ENCODE measurements at regions of chr3 and their contacts with region 1.

Region 1: DNA sequence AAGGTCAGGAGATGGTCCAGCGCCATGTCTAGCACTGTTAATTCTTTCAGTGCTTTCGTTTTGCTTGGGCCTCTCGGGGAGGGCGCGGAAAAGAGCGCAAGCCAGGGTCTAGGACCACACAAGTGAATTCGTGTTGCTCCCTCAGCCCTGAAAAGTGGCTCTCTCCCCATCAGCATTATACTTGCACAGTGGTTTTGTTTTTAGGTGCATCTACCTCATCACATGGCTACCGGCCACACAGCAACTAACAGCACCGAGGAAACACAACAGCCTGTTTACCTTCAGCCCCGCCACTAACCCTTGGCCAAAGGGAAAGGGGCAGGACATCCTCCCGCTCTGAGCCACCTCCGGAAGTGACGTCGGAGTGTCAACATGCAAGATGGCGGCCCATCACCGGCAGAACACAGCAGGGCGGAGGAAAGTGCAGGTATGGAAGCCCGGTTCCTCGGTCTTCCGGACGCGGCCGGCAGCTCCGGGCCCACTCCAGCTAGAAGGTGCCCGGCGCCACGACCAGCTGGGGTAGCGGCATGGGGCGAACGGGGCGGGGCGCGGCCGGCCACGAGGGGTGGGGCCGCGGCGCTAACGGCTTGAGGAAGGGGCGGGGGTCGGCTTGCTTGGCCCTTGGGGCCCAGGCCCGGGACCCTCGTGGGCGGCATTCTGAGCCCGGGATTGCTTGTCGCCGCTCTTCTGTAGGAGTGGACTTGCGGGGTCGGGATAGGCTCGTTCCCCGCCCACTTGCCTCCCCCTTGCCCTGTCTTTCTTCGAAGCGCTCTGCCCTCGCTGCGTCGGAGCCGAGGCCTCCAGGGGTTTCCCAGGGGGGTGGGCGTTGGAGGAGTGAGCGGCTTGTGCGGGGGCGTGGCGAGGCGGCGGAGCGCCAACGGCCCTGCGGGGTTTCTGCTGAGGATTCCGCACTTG is at the starts of genes SCN11A and WDR48:
- DNase-seq: peak; percentile 85 to 97 (median 90)
- ATAC-seq: peak; percentile 89
- H3K4me3 ChIP-seq: peak within 1 kb of the TSS; percentile 84
- H3K4me3 Mint-ChIP-seq: peak within 1 kb of the TSS; percentile 95
- H3K27ac ChIP-seq: peak within 1 kb of the TSS; percentile 90 to 95
- H3K27ac Mint-ChIP-seq: peak within 1 kb of the TSS; percentile 99
- H3K4me1 ChIP-seq: peaks cover 25% of the 10 kb centered on the region
- H3K4me1 Mint-ChIP-seq: peaks cover 72% of the 10 kb centered on the region
- H3K27me3 ChIP-seq: no peaks in the 10 kb centered on the region
- H3K27me3 Mint-ChIP-seq: no peaks in the 10 kb centered on the region
- CTCF ChIP-seq: no peak
- total RNA-seq, gene SCN11A: 0.08 TPM in 1 of 2 experiments, not detected in the other
- total RNA-seq, gene WDR48: 81.2 to 88.6 TPM

Region 2: DNA sequence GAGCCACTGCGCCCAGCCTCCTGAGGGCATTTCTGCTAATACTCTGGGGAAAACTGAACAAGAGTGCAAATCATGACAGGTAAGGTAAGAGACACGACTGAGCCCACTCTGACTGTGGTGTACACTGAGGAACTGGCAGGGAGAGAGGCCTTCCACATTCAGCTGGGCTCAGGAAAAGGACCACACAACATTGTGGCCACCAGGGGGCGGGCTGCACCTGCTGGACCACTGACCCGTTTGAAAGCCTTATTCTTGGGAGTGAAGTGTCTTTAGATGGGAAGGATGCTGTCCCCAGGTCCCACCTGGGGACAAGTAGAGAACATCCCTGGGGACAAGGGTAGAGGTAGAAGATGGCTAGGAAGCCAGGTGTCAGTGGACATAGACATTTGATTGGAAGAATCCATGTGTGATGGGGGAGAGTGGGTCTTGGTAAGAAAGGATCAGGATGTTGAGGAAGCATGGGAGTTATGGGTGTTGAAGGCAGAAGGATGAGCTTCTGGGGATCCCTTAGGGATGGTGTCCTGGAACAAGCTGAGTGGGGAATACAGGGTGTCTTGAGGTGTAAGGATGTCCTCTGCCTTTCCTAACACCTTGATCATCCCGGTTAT is 1196.4 kb before region 1 on chr3:
- CTCF ChIA-PET with region 1: no interaction called
- POLR2A ChIA-PET with region 1: no interaction called
- intact Hi-C with region 1: loop called in 1 of 2 experiments (anchors 10 kb)
- DNase-seq: peak; percentile 50 to 85 (median 70)
- ATAC-seq: peak; percentile 47
- H3K4me3 ChIP-seq: no peak overlapping the region
- H3K4me3 Mint-ChIP-seq: peak overlapping the region; percentile 7
- H3K27ac ChIP-seq: no peak overlapping the region
- H3K27ac Mint-ChIP-seq: no peak overlapping the region
- H3K4me1 ChIP-seq: peaks cover 8% of the 10 kb centered on the region
- H3K4me1 Mint-ChIP-seq: peaks cover 8% of the 10 kb centered on the region
- H3K27me3 ChIP-seq: no peaks in the 10 kb centered on the region
- H3K27me3 Mint-ChIP-seq: no peaks in the 10 kb centered on the region
- CTCF ChIP-seq: peak; percentile 89

Region 3: GRCh38 chr3:38950581-38950980 is 101.3 kb before region 1 on chr3:
- CTCF ChIA-PET with region 1: no interaction called
- POLR2A ChIA-PET with region 1: no interaction called
- intact Hi-C with region 1: no loop called
- DNase-seq: peak in 1 of 14 experiments; percentile 2
- ATAC-seq: no peak
- H3K4me3 ChIP-seq: no peak overlapping the region
- H3K4me3 Mint-ChIP-seq: no peak overlapping the region
- H3K27ac ChIP-seq: no peak overlapping the region
- H3K27ac Mint-ChIP-seq: no peak overlapping the region
- H3K4me1 ChIP-seq: no peaks in the 10 kb centered on the region
- H3K4me1 Mint-ChIP-seq: no peaks in the 10 kb centered on the region
- H3K27me3 ChIP-seq: no peaks in the 10 kb centered on the region
- H3K27me3 Mint-ChIP-seq: peaks cover 6% of the 10 kb centered on the region
- CTCF ChIP-seq: no peak

Region 4: GRCh38 chr3:39107388-39108199 is 55.7 kb after region 1 on chr3 and contains the starts of genes GORASP1 and TTC21A:
- CTCF ChIA-PET with region 1: no interaction called
- POLR2A ChIA-PET with region 1: interaction called, 3 read pairs
- intact Hi-C with region 1: loop called in 1 of 2 experiments (anchors 2 kb)
- DNase-seq: peak in 13 of 14 experiments; percentile 33 to 84 (median 62)
- ATAC-seq: peak; percentile 71
- H3K4me3 ChIP-seq: peak within 1 kb of the TSS; percentile 96
- H3K4me3 Mint-ChIP-seq: peak within 1 kb of the TSS; percentile 97
- H3K27ac ChIP-seq: peak within 1 kb of the TSS; percentile 56 to 57
- H3K27ac Mint-ChIP-seq: peak within 1 kb of the TSS; percentile 81
- H3K4me1 ChIP-seq: peaks cover 54% of the 10 kb centered on the region
- H3K4me1 Mint-ChIP-seq: peaks cover 50% of the 10 kb centered on the region
- H3K27me3 ChIP-seq: no peaks in the 10 kb centered on the region
- H3K27me3 Mint-ChIP-seq: no peaks in the 10 kb centered on the region
- CTCF ChIP-seq: no peak
- total RNA-seq, gene GORASP1: 29.1 to 31.5 TPM
- total RNA-seq, gene TTC21A: 4.1 to 5.2 TPM

Region 5: DNA sequence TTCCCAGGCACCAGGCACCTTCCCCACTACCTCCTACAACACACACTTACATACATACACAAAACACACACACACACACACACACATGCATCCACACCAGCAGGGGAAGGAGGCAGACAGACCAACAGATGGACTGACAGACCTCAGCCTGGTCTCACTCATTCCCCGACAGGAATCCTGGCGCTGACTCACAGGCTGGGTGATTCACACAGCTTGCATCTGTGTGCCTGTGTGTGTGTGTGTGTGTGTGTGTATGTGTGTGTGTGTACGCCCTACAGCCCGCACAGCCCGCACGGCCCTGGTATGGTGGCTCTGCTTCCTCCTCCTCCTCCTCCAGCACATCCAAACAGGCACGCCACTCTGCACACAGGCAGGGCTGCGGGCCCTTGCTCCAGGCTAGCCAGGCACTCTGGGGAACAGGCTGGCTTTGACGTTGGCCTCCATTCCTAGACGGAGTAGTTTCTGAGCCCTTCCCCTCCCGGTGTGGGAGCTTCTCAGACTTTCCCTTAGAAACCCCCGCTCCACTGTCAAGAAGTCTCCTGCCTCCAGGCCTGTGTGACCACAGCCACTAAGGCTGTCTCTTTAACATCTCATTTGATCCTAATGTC is 95.2 kb after region 1 on chr3:
- CTCF ChIA-PET with region 1: no interaction called
- POLR2A ChIA-PET with region 1: interaction called, 3 read pairs
- intact Hi-C with region 1: loop called in 1 of 2 experiments (anchors 10 kb)
- DNase-seq: peak in 13 of 14 experiments; percentile 48 to 89 (median 71)
- ATAC-seq: peak; percentile 27
- H3K4me3 ChIP-seq: peak overlapping the region; percentile 44
- H3K4me3 Mint-ChIP-seq: peak overlapping the region; percentile 93
- H3K27ac ChIP-seq: peak overlapping the region; percentile 64 to 83
- H3K27ac Mint-ChIP-seq: peak overlapping the region; percentile 97
- H3K4me1 ChIP-seq: peaks cover 77% of the 10 kb centered on the region
- H3K4me1 Mint-ChIP-seq: peaks cover 83% of the 10 kb centered on the region
- H3K27me3 ChIP-seq: no peaks in the 10 kb centered on the region
- H3K27me3 Mint-ChIP-seq: no peaks in the 10 kb centered on the region
- CTCF ChIP-seq: no peak

Region 6: DNA sequence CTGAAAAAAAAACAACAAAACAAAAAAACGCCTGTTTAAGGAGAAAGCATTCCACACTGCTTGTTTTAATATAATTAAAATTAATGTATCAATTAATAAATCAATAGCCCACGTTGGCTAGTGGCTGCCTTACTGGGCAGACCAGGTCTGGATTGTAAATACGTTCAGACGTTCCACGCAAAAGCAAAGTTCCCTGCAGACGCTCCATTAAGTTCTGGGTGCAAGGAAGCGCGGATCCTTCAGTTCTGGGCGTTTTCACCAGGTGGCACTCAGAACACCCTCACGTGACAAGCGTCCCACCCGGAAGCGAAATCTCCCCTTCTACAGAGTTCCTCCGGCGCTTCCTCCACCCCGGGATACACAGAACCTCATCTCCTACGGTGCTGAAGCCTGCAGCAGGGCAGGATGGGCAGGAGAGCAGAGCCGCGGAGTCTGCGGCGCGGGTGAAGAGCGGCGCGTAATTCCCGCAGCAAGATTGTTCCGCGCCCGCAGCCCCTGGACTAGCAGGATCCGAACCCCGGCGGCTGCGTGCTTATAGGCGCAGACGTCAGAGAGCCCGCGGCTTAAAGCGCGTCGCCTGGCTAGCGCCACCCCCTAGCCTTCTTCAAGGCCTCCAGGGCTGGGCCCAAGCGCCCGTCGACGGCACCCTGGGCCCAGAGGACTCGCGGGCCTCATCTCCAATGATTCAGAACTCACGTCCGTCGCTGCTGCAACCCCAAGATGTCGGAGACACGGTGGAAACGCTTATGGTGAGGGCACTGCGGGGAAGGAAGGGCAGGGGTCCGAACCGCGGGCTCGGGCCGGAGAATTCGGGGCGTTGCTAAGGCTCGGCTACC is 331.4 kb after region 1 on chr3 and contains the start of gene SLC25A38:
- CTCF ChIA-PET with region 1: no interaction called
- POLR2A ChIA-PET with region 1: no interaction called
- intact Hi-C with region 1: loop called in 1 of 2 experiments (anchors 5 kb)
- DNase-seq: peak; percentile 58 to 94 (median 75)
- ATAC-seq: peak; percentile 82
- H3K4me3 ChIP-seq: peak within 1 kb of the TSS; percentile 95
- H3K4me3 Mint-ChIP-seq: peak within 1 kb of the TSS; percentile 94
- H3K27ac ChIP-seq: peak within 1 kb of the TSS; percentile 93 to 97
- H3K27ac Mint-ChIP-seq: peak within 1 kb of the TSS; percentile 97
- H3K4me1 ChIP-seq: peaks cover 53% of the 10 kb centered on the region
- H3K4me1 Mint-ChIP-seq: peaks cover 55% of the 10 kb centered on the region
- H3K27me3 ChIP-seq: no peaks in the 10 kb centered on the region
- H3K27me3 Mint-ChIP-seq: no peaks in the 10 kb centered on the region
- CTCF ChIP-seq: peak; percentile 59
- total RNA-seq, gene SLC25A38: 43.2 to 44.7 TPM

Measured in CD4-positive, alpha-beta T cell (primary cell).